ENCODE measurements at regions of chr1 and their contacts with region 1.

Region 1: DNA sequence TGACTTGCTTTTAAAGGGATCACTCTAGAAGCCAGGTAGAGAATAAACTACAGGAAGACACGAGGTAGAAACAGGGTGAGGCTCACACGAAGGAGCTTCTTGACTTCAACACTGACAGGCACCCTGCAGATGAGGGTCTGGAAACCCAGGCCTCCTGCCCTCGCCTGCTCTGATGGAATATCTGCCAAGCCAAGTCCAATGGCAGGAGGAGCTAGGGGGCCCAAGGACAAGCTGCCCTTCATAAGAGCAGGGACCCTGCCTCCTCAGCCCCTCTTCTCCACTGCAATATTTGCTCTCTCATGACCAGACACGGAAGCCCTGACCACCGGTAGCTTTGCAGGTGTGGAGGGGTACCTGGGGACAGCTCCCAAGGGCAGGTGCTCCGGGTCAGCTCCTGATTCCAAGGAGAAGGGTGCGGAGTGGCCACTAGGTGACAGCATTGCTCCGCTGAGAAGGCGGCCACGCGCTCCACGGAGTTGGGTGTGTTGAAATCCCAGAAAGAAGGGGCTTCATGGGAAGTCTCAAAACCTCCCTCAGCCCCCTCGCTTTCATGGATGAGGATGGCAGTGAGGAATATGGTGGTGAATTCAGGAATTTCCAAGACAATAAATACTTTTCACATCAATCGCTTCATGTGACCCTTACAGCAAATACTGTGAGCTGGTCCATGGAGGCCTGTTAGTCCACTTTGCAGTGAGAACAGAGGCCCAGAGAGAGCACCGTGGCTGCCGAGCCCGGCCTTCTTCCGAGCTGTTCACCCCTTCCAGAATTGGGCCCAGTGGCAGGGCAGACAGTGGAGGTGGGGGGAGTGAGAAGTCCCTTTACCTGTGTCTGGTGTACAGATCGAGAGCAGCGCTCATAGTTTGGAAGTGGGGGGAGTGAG is 33.2 kb upstream of the PAX7 start:
- DNase-seq: peak; percentile 18 to 77 (median 56)
- ATAC-seq: no peak
- H3K4me3 ChIP-seq: no peak overlapping the region
- H3K4me3 Mint-ChIP-seq: no peak overlapping the region
- H3K27ac ChIP-seq: no peak overlapping the region
- H3K27ac Mint-ChIP-seq: no peak overlapping the region
- H3K4me1 ChIP-seq: no peaks in the 10 kb centered on the region
- H3K4me1 Mint-ChIP-seq: no peaks in the 10 kb centered on the region
- H3K27me3 ChIP-seq: peaks cover 0 to 5% of the 10 kb centered on the region in 2 experiments
- H3K27me3 Mint-ChIP-seq: peaks cover 20% of the 10 kb centered on the region
- CTCF ChIP-seq: peak; percentile 86

Region 2: GRCh38 chr1:18614069-18614735 is 16.8 kb after region 1 on chr1:
- CTCF ChIA-PET with region 1: interaction called, 24 read pairs
- POLR2A ChIA-PET with region 1: no interaction called
- intact Hi-C with region 1: no loop called
- DNase-seq: no peak
- ATAC-seq: no peak
- H3K4me3 ChIP-seq: no peak overlapping the region
- H3K4me3 Mint-ChIP-seq: no peak overlapping the region
- H3K27ac ChIP-seq: no peak overlapping the region
- H3K27ac Mint-ChIP-seq: no peak overlapping the region
- H3K4me1 ChIP-seq: no peaks in the 10 kb centered on the region
- H3K4me1 Mint-ChIP-seq: no peaks in the 10 kb centered on the region
- H3K27me3 ChIP-seq: no peaks in the 10 kb centered on the region
- H3K27me3 Mint-ChIP-seq: peaks cover 6% of the 10 kb centered on the region
- CTCF ChIP-seq: no peak

Region 3: DNA sequence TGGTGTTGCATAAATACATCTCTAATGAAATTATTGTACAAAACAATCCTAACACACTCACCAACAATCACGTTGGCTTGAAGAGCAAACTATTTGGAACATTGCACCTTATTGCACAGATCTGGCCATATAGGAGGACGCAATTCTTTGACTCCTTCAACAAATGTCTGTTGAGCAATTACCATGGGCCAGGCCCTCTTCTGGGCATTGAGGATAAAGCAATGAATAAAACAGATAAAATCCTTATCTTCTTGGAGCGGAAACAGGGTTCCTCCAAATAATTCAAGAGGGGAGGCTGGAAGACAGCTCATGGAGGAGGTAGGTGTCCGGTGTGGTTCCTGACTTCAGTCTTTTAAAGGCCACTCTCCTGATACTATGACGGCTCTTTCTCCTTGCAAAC is 76.6 kb after region 1 on chr1:
- CTCF ChIA-PET with region 1: interaction called, 68 read pairs
- POLR2A ChIA-PET with region 1: no interaction called
- intact Hi-C with region 1: no loop called
- DNase-seq: no peak
- ATAC-seq: no peak
- H3K4me3 ChIP-seq: no peak overlapping the region
- H3K4me3 Mint-ChIP-seq: no peak overlapping the region
- H3K27ac ChIP-seq: no peak overlapping the region
- H3K27ac Mint-ChIP-seq: no peak overlapping the region
- H3K4me1 ChIP-seq: no peaks in the 10 kb centered on the region
- H3K4me1 Mint-ChIP-seq: peaks cover 18% of the 10 kb centered on the region
- H3K27me3 ChIP-seq: peaks cover 0 to 4% of the 10 kb centered on the region in 2 experiments
- H3K27me3 Mint-ChIP-seq: peaks cover 11% of the 10 kb centered on the region
- CTCF ChIP-seq: no peak

Region 4: GRCh38 chr1:18693256-18694098 is 96.1 kb after region 1 on chr1:
- CTCF ChIA-PET with region 1: interaction called, 64 read pairs
- POLR2A ChIA-PET with region 1: no interaction called
- intact Hi-C with region 1: no loop called
- DNase-seq: no peak
- ATAC-seq: no peak
- H3K4me3 ChIP-seq: no peak overlapping the region
- H3K4me3 Mint-ChIP-seq: no peak overlapping the region
- H3K27ac ChIP-seq: no peak overlapping the region
- H3K27ac Mint-ChIP-seq: no peak overlapping the region
- H3K4me1 ChIP-seq: no peaks in the 10 kb centered on the region
- H3K4me1 Mint-ChIP-seq: no peaks in the 10 kb centered on the region
- H3K27me3 ChIP-seq: peaks cover 0 to 3% of the 10 kb centered on the region in 2 experiments
- H3K27me3 Mint-ChIP-seq: peaks cover 36% of the 10 kb centered on the region
- CTCF ChIP-seq: no peak

Region 5: DNA sequence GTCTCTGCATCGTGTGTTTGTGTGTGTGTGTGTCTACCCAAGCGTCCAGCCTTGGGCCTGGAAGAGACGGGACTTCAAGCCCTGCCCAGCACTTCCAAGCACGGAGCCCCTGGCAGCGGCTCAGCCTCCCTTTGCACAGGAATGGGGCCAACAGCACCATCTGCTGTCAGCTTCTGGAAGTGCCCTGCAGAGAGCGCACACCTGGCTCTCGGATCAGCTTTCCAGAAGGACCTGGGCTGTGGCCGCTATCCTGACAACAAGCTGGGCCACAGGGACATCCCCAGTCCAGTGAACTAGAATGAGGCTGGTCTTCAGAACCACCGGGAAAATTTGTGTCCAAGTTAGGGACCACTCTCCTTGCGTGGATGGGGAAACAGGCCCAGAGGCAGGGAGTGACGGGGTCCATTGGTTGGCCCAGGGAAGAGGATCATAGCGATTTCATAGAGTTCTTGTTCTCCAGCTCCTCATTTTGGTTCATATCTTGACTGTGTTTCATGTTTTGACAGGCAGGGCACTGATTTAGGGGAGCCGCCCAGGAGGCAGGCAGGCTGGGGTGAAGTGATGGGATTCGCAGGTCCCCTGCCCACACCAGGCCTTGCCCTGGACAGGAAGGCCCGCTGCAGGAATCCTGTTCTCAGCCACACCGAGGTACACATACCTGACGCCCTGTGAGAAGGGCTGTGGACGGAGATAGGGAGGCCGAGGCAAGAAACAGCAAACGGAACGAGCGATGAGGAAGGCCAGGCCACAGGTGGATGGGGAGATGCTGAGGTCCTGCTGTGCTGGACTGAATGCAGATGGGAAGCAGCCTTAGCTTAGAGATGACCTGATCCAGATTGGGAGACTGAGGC is 223.6 kb after region 1 on chr1:
- CTCF ChIA-PET with region 1: interaction called, 43 read pairs
- POLR2A ChIA-PET with region 1: no interaction called
- intact Hi-C with region 1: loop called in 1 of 2 experiments (anchors 1 kb)
- DNase-seq: peak; percentile 28 to 73 (median 57)
- ATAC-seq: peak; percentile 29
- H3K4me3 ChIP-seq: no peak overlapping the region
- H3K4me3 Mint-ChIP-seq: no peak overlapping the region
- H3K27ac ChIP-seq: no peak overlapping the region
- H3K27ac Mint-ChIP-seq: no peak overlapping the region
- H3K4me1 ChIP-seq: no peaks in the 10 kb centered on the region
- H3K4me1 Mint-ChIP-seq: no peaks in the 10 kb centered on the region
- H3K27me3 ChIP-seq: peaks cover 0 to 7% of the 10 kb centered on the region in 2 experiments
- H3K27me3 Mint-ChIP-seq: peaks cover 53% of the 10 kb centered on the region
- CTCF ChIP-seq: peak; percentile 77

Measured in CD8-positive, alpha-beta T cell (primary cell).